ENCODE measurements at regions of chr22 and their contacts with region 1.

Region 1: GRCh38 chr22:38872172-38872830 is at the start of gene CBX6:
- H3K4me3 ChIP-seq: peak within 1 kb of the TSS; percentile 75
- H3K27ac ChIP-seq: peak within 1 kb of the TSS; percentile 84
- H3K4me1 ChIP-seq: peaks cover 15% of the 10 kb centered on the region
- CTCF ChIP-seq: no peak

Region 2: DNA sequence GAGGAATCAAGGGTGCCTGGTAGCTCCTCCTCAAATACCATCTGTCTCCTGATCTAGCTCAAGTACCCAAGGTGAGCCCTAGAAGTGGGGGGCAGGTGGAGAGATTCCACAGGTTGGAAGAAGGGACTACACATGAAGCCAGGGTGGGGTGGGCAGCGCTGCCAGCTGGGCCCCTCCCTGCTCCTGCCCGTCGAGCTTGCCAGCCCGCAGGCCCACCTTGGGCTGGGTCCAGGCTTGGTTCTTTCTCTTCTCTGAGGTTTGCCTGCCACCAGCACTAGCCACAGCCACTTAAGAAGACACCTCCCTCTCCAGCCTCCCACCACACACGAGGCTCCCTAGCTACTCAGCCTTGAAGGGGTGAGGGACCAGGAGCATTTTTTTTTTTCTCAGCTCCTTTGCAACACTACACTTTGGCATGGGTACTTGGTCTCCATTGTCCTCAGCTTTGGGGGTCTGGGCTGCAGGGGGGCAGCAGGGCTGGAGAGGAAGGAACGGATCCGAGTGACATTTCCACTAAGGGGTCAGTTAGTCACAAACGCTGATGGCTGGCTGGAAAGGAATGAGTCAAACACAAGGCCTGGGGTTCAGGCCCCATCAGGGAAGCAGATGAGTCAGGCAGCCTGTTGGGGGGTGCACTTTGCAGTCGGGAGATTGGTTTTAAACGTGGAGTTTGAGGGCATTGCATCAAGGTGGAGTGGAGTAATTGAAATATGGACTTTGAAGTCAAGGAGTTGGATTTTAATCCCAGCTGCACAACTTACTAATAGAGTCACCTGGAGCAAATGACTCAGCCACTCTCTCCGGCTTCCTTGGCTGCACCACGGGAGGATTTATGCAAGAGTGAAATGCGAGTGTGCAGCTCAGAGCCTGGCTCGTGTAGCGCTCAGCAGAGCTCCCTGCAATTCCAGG is 21.1 kb before region 1 on chr22:
- CTCF ChIA-PET with region 1: interaction called, 54 read pairs
- POLR2A ChIA-PET with region 1: interaction called, 5 read pairs
- H3K4me3 ChIP-seq: no peak overlapping the region
- H3K27ac ChIP-seq: no peak overlapping the region
- H3K4me1 ChIP-seq: no peaks in the 10 kb centered on the region
- CTCF ChIP-seq: no peak

Region 3: GRCh38 chr22:38927033-38927781 is 54.9 kb after region 1 on chr22:
- CTCF ChIA-PET with region 1: interaction called, 24 read pairs
- POLR2A ChIA-PET with region 1: interaction called, 6 read pairs
- H3K4me3 ChIP-seq: no peak overlapping the region
- H3K27ac ChIP-seq: no peak overlapping the region
- H3K4me1 ChIP-seq: peaks cover 15% of the 10 kb centered on the region
- CTCF ChIP-seq: 0 out of 2 replicates have a peak, but pooled peaks have one; percentile 30

Region 4: GRCh38 chr22:38981992-38982927 is 110.0 kb after region 1 on chr22 and contains the start of gene APOBEC3B:
- CTCF ChIA-PET with region 1: interaction called, 13 read pairs
- POLR2A ChIA-PET with region 1: interaction called, 3 read pairs
- H3K4me3 ChIP-seq: peak within 1 kb of the TSS; percentile 13
- H3K27ac ChIP-seq: peak within 1 kb of the TSS; percentile 39; the same call in 1 of the 2 replicates
- H3K4me1 ChIP-seq: peaks cover 2% of the 10 kb centered on the region; the same call in 1 of the 2 replicates
- CTCF ChIP-seq: no peak

Region 5: GRCh38 chr22:39117585-39118191 is 245.4 kb after region 1 on chr22:
- CTCF ChIA-PET with region 1: interaction called, 31 read pairs
- POLR2A ChIA-PET with region 1: interaction called, 3 read pairs
- H3K4me3 ChIP-seq: no peak overlapping the region
- H3K27ac ChIP-seq: no peak overlapping the region
- H3K4me1 ChIP-seq: no peaks in the 10 kb centered on the region
- CTCF ChIP-seq: no peak